ENCODE measurements at regions of chr9 and their contacts with region 1.

Region 1: DNA sequence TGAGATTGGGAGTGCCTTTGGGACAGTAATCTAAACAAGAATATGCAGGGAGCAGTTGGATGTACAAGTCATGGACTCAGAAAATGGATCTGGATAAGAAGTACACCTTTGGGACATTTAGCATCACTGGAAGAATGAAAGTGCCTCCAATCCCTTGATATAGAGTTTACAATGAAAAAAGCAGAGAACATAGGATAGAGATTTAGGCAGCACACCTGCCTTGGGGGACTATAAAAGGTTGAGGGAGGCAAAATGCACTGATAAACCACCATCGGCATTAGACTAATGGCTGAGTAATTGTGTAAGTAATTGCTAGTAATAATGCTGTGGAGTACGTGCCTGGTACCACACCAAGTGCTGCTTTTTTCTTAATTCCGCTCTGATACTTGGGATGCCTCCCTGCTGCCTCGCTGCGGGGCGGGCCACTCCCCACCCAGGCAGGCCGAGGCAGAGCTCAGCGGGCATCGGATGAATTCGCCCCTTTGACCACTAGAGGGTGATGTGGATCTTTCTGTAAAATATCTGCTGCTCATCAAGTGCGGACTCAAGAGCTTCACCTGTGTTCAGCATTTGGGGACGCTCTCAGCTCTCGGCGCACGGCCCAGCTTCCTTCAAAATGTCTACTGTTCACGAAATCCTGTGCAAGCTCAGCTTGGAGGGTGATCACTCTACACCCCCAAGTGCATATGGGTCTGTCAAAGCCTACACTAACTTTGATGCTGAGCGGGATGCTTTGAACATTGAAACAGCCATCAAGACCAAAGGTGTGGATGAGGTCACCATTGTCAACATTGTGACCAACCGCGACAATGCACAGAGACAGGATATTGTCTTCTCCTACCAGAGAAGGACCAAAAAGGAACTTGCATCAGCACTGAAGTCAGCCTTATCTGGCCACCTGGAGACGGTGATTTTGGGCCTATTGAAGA is 99.9 kb downstream of the ANKRD18B start:
- DNase-seq: peak; percentile 8
- H3K4me3 ChIP-seq: no peak overlapping the region
- H3K27me3 ChIP-seq: no peaks in the 10 kb centered on the region
- CTCF ChIP-seq: peak; percentile 85

Region 2: DNA sequence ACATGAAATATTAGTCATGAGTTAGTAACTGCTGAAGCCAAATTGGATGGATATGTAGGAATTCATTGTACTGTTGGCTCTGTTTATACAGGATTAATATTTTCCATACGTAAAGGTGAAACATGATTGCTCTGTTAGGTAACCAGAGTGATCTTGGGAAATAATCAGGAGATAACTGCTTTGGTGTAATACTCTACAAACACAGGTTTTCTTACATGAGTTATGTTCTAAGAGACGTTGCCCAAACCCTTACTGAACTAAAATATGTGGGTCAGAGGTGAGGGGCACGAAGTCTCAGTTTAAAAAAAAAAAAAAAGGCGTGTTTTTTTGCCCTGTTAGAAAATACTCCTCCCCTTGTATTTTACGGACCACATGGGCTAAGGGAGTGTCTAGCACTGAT is 591.1 kb before region 1 on chr9:
- CTCF ChIA-PET with region 1: no interaction called
- POLR2A ChIA-PET with region 1: no interaction called
- DNase-seq: no peak
- H3K4me3 ChIP-seq: no peak overlapping the region
- H3K27me3 ChIP-seq: no peaks in the 10 kb centered on the region
- CTCF ChIP-seq: no peak

Region 3: DNA sequence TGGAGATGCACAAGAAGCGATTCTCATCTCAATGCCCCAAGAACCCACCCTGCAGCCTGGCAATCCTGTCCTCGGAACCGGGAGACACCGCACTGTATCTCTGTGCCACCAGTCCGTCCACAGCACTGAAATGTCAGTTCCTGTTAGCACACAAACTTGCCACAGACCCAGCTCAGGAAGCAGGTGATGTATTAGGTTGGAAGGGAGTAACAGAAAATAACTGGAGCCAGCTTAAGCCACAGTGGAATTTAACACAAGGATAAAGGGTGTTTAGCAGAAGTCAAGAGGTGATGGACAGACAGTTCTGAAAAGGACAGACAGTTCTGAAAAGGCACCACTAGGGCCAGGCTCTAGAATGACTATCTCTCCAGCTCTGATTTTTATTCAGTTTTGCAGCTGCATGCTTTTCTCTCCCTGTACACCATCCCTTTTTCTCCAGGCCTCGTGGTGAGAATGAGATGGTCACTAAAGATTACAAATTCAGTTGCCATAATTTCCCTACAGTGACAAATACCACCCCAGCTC is 14.5 kb after region 1 on chr9:
- CTCF ChIA-PET with region 1: interaction called, 24 read pairs
- POLR2A ChIA-PET with region 1: no interaction called
- DNase-seq: no peak
- H3K4me3 ChIP-seq: no peak overlapping the region
- H3K27me3 ChIP-seq: peaks cover 21% of the 10 kb centered on the region
- CTCF ChIP-seq: no peak

Region 4: GRCh38 chr9:33721674-33722358 is 97.9 kb after region 1 on chr9:
- CTCF ChIA-PET with region 1: interaction called, 276 read pairs
- POLR2A ChIA-PET with region 1: no interaction called
- DNase-seq: no peak
- H3K4me3 ChIP-seq: no peak overlapping the region
- H3K27me3 ChIP-seq: peaks cover 11% of the 10 kb centered on the region
- CTCF ChIP-seq: peak; percentile 100

Region 5: DNA sequence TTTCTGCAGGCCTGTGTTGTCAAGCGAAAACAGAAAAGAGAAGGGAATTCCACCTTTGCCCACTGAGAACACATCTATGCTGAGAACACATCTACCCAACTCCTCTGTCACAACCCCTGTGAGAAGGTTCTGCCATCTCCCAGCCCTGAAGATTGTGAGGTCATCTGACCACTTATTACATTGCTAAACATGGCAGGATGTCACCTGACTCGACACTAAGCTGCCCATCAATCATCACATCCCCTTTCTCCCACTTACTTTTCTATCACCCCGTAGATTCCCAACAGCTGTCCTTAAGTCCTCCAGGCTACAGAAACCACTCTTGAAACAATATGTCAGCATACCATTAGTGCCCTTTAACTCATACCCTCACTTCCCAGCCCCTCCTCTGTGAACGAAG is 107.2 kb after region 1 on chr9:
- CTCF ChIA-PET with region 1: interaction called, 276 read pairs
- POLR2A ChIA-PET with region 1: no interaction called
- DNase-seq: no peak
- H3K4me3 ChIP-seq: no peak overlapping the region
- H3K27me3 ChIP-seq: peaks cover 2% of the 10 kb centered on the region; the same call in 1 of the 2 replicates
- CTCF ChIP-seq: no peak

Region 6: DNA sequence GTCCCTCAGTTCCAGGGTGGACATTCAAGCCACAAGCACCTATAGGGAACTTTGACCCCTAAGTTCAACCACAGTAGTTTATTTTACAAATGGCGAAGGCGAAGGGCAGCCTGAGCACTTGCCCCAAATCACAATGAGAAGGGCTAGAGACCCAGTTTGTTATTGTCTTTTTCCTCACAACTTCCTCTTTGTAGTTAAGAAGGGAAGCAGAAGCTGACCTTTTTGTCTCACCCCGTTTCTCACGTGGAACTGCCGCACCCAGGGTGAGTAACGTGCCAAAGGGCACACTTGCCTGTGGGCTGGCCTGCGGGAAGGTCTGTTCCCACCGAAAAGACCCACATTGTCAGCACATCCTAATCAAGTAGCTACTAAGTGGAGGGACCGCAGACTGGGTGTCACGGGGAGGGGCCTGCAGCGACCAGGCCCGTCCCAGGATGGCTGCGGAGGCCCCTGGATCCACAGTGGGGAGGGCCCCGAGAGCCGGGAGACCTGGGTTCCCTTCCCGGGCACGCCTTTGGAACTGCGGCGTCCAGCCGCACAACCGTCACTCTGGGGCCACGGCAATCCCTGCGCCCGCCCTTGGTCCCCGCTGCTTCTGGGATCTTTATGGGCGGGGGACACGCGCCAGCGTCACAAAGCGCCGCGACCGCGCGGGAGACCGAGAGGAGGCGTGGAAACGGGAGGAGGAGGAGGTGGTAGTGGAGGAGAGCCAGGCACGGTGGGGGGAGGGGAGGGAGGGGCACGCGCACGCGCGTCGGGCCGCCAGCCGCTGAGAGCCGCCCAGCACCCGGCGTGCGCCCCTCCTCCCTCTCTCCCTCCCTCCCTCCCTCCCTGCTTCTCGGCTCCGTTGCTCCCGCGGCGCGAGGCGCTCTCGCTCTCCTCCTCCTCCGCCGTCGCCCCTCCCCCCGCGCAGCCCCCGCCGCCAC is 192.7 kb after region 1 on chr9 and contains the start of gene UBE2R2:
- CTCF ChIA-PET with region 1: no interaction called
- POLR2A ChIA-PET with region 1: no interaction called
- DNase-seq: peak; percentile 52
- H3K4me3 ChIP-seq: peak within 1 kb of the TSS; percentile 93
- H3K27me3 ChIP-seq: no peaks in the 10 kb centered on the region
- CTCF ChIP-seq: no peak
- polyA plus RNA-seq, gene UBE2R2: 18.3 and 25.1 TPM in 2 replicates

Region 7: GRCh38 chr9:33908121-33908520 is 284.2 kb after region 1 on chr9:
- CTCF ChIA-PET with region 1: no interaction called
- POLR2A ChIA-PET with region 1: no interaction called
- DNase-seq: no peak
- H3K4me3 ChIP-seq: no peak overlapping the region
- H3K27me3 ChIP-seq: no peaks in the 10 kb centered on the region
- CTCF ChIP-seq: no peak

Region 8: DNA sequence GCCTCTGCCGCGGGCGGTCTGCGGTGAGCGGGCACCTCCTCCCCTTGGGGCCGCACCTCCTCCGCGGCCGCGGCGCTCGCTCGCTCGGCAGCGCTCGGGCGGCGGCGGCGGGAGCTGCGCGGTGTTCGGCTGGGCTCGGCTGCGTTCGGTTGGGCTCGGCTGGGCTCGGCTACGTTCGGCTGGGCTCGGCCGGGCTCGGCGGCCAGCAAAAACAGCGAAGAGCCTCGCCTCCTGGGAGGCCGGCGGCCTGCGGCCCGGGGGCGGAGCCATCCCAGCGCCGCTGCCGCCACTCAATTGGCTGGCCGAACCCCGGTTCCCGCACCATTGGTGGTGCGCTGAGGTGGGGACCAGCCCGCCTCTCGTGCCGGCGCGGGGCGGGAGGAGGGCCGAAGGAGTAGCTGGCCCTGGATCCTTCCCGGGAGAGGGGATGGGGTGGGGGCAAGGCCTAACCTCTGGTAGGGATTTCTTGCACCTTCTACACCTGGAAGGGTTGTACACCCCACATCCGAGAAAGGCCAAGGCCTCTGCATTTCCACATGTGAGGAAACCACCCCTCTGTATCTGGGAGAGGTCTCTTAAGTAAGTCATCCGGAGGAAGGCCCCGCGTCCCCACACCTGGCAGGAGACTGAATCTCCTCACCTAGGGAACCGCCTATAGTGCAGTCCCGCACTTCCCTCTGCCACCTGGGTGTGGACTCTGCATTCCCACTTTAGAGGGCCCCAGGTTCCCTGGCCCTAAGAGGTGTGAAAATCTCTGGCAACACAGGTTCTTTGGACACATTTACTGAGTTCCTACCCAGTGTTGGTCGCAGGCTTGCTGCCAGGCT is 899.3 kb after region 1 on chr9 and contains the start of gene ENHO:
- CTCF ChIA-PET with region 1: no interaction called
- POLR2A ChIA-PET with region 1: no interaction called
- DNase-seq: no peak
- H3K4me3 ChIP-seq: peak within 1 kb of the TSS; percentile 29; the same call in 1 of the 2 replicates
- H3K27me3 ChIP-seq: peaks cover 10% of the 10 kb centered on the region
- CTCF ChIP-seq: no peak
- polyA plus RNA-seq, gene ENHO: 0.11 TPM in 1 of 2 replicates, not detected in the other